ENCODE measurements at regions of chr7 and their contacts with region 1.

Region 1: DNA sequence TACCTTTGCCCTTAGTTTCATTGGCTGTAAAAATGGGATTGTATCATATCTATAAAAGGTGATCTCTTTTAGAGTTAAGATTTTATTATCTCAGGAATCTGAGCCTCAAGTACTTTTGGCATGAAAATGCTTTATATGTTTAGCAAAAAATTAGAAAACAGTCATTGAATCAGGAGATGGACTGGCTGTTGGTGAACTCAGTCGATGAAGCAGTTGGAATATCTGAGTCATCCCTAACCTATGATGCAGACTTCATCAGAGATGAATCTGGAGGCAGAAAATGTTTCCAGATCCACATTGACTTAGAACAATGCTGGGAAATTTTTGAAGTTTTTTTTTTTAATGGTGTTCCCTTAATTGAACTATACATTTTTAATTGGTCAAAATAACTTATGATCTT is 228.5 kb downstream of the SLC25A13 start:
- DNase-seq: peak; percentile 91
- ATAC-seq: peak; percentile 86; the same call in 1 of the 2 replicates
- H3K4me3 ChIP-seq: no peak overlapping the region
- H3K27ac ChIP-seq: no peak overlapping the region
- H3K4me1 ChIP-seq: no peaks in the 10 kb centered on the region
- H3K27me3 ChIP-seq: no peaks in the 10 kb centered on the region
- CTCF ChIP-seq: no peak
- POLR2A ChIP-seq: no peak
- RAD21 ChIP-seq: no peak

Region 2: GRCh38 chr7:96321658-96322372 is 228.4 kb after region 1 on chr7 and contains the start of gene SLC25A13:
- CTCF ChIA-PET with region 1: no interaction called
- POLR2A ChIA-PET with region 1: no interaction called
- dilution Hi-C with region 1: no loop called
- in situ Hi-C with region 1: no loop called
- intact Hi-C with region 1: loop called (anchors 5 kb)
- DNase-seq: peak; percentile 73
- ATAC-seq: peak; percentile 97
- H3K4me3 ChIP-seq: peak within 1 kb of the TSS; percentile 60
- H3K27ac ChIP-seq: peak within 1 kb of the TSS; percentile 66
- H3K4me1 ChIP-seq: no peaks in the 10 kb centered on the region
- H3K27me3 ChIP-seq: no peaks in the 10 kb centered on the region
- CTCF ChIP-seq: no peak
- POLR2A ChIP-seq: peak; percentile 62
- RAD21 ChIP-seq: no peak
- total RNA-seq, gene SLC25A13: 11.7 and 13.6 TPM in 2 replicates

Measured in IMR-90 (cell line).